Astrocyte of the cerebellum (primary cell): ENCODE measurements at regions of chr13 and their contacts with region 1.

Region 1: DNA sequence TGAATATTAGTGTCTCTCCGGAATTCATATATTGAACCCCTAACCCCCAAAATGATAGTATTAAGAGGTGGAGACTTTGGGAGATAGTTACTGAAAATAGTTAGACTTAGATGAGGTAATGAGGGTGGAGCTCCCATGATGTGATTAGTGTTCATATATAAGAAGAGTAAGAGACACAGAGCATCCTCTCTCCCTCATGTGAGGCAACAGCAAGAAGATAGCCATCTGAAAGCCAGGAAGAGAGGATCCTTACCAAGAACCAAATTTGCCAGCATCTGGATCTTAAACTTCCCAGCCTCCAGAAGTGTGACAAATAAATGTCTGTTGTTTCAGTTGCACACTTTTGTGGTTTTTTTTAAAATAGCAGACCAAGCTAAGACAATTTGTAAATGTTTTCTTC is 23.9 kb downstream of the FNDC3A start:
- DNase-seq: no peak
- H3K4me3 ChIP-seq: no peak overlapping the region
- CTCF ChIP-seq: no peak

Region 2: GRCh38 chr13:48828962-48829421 is 170.6 kb before region 1 on chr13:
- in situ Hi-C with region 1: no loop called
- DNase-seq: no peak
- H3K4me3 ChIP-seq: no peak overlapping the region
- CTCF ChIP-seq: no peak

Region 3: GRCh38 chr13:49046002-49046401 is 46.4 kb after region 1 on chr13:
- in situ Hi-C with region 1: no loop called
- DNase-seq: no peak
- H3K4me3 ChIP-seq: no peak overlapping the region
- CTCF ChIP-seq: no peak

Region 4: GRCh38 chr13:49098771-49099512 is 99.3 kb after region 1 on chr13:
- in situ Hi-C with region 1: no loop called
- DNase-seq: no peak
- H3K4me3 ChIP-seq: no peak overlapping the region
- CTCF ChIP-seq: peak; percentile 41

Region 5: DNA sequence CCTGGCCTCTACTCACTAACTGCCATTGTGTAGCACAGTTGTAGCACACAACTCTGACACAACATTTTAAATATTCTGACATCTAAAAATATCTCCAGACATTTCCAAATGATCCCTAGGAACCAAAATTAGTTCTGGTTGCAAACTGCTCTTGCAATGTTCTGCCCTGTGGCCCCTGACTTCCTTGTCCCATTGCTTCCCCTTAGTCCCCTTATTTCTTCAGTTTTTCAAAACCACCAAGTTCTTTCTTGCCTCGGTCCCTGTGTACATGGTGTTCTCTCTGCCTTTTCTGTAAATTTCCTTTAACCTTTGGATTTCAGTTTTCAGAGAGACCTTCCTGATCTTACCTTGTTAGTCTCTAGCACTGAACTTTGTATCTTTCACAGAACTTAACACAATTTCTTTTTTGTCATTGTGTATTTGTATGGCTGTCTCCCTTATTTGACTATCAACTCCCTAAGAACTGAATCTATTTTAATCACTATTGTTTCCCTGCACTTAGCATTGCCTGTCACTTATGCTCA is 132.9 kb after region 1 on chr13:
- in situ Hi-C with region 1: loop called (anchors 10 kb)
- DNase-seq: no peak
- H3K4me3 ChIP-seq: no peak overlapping the region
- CTCF ChIP-seq: no peak

Region 6: DNA sequence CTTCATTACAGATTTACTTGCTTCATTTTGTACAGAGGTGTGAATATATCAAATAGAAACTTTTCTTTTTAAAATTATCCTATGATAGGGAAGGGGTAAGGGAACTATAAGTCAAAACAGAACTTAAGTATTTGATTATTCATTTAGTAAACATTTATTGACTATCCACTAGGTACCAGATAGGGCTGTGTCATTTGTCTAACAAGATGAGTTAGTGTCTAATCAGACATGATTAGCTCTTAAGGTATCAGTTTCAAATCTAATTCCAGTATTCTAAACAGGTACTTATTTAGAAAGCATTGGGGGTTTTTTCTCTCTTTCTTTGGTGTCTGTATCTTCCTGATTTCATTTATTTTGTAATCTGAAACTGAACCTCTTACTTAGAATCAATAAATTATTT is 280.3 kb after region 1 on chr13:
- in situ Hi-C with region 1: loop called (anchors 10 kb)
- DNase-seq: no peak
- H3K4me3 ChIP-seq: no peak overlapping the region
- CTCF ChIP-seq: no peak